CD4-positive, alpha-beta memory T cell (primary cell): ENCODE measurements at regions of chr19 and their contacts with region 1.

Region 1: DNA sequence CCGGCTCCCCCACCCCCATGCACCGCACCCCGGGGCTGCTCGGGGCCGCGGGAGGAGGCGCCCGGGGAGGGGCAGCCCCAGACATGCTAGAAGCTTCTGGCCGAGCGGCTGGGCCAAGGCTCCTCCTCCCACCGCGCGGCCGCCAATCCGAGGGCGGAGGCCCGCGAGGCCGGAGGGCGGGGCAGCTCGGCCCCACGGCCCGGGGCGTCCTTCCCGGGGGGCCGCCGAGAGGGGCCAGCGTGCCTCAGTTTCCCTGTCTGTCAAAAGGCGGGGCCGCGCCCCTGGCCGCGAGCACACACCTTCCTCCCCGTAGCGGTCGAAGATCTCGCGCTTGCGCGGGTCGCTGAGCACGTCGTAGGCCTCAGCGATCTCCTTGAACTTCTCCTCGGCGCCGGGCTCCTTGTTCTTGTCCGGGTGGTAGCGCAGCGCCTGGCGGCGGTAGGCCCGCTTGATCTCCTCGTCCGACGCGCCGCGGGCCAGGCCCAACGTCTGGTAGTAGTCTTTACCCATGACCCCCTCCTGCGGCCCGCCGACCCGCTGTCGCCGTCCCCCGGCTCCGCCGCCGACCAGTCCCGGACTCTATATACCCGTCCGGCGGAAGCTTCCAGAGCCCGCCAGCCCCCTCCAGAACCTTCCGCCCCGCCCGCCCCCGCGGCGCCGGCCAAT is at the start of gene DNAJB1:
- DNase-seq: peak in 3 of 5 donors; percentile 69 to 73 (median 73)
- H3K4me3 ChIP-seq: peak within 1 kb of the TSS; percentile 62 to 99
- H3K4me3 Mint-ChIP-seq: peak within 1 kb of the TSS; percentile 92 to 99 (median 96)
- H3K27ac ChIP-seq: peak within 1 kb of the TSS; percentile 94
- H3K27ac Mint-ChIP-seq: peak within 1 kb of the TSS; percentile 95 to 99 (median 99)
- H3K4me1 ChIP-seq: peaks cover 69% of the 10 kb centered on the region
- H3K4me1 Mint-ChIP-seq: peaks cover 46 to 81% (median 62%) of the 10 kb centered on the region in 4 donors
- H3K27me3 ChIP-seq: no peaks in the 10 kb centered on the region
- H3K27me3 Mint-ChIP-seq: no peaks in the 10 kb centered on the region
- total RNA-seq, gene DNAJB1: 122 to 138 TPM

Region 2: GRCh38 chr19:13938301-13939064 is 579.5 kb before region 1 on chr19 and contains the start of gene PODNL1:
- CTCF ChIA-PET with region 1: no interaction called
- POLR2A ChIA-PET with region 1: no interaction called
- intact Hi-C with region 1: no loop called
- DNase-seq: no peak
- H3K4me3 ChIP-seq: no peak within 1 kb of the TSS
- H3K4me3 Mint-ChIP-seq: no peak within 1 kb of the TSS
- H3K27ac ChIP-seq: no peak within 1 kb of the TSS
- H3K27ac Mint-ChIP-seq: no peak within 1 kb of the TSS
- H3K4me1 ChIP-seq: no peaks in the 10 kb centered on the region
- H3K4me1 Mint-ChIP-seq: peaks cover 0 to 8% (median 2%) of the 10 kb centered on the region in 4 donors
- H3K27me3 ChIP-seq: peaks cover 3% of the 10 kb centered on the region
- H3K27me3 Mint-ChIP-seq: peaks cover 0 to 5% of the 10 kb centered on the region in 2 donors
- total RNA-seq, gene PODNL1: not detected

Region 3: GRCh38 chr19:14383661-14384555 is 134.1 kb before region 1 on chr19:
- CTCF ChIA-PET with region 1: no interaction called
- POLR2A ChIA-PET with region 1: interaction called, 25 read pairs
- intact Hi-C with region 1: loop called (anchors 5 kb)
- DNase-seq: peak in 3 of 5 donors; percentile 40 to 91 (median 41)
- H3K4me3 ChIP-seq: peak overlapping the region; percentile 40 to 82
- H3K4me3 Mint-ChIP-seq: peak overlapping the region; percentile 91 to 99 (median 98)
- H3K27ac ChIP-seq: peak overlapping the region; percentile 99
- H3K27ac Mint-ChIP-seq: peak overlapping the region; percentile 96 to 100 (median 98)
- H3K4me1 ChIP-seq: peaks cover 41% of the 10 kb centered on the region
- H3K4me1 Mint-ChIP-seq: peaks cover 19 to 66% (median 37%) of the 10 kb centered on the region in 4 donors
- H3K27me3 ChIP-seq: no peaks in the 10 kb centered on the region
- H3K27me3 Mint-ChIP-seq: peaks cover 0 to 4% of the 10 kb centered on the region in 2 donors

Region 4: GRCh38 chr19:14505488-14506432 is 12.2 kb before region 1 on chr19:
- CTCF ChIA-PET with region 1: interaction called, 66 read pairs
- POLR2A ChIA-PET with region 1: interaction called, 1,220 read pairs
- intact Hi-C with region 1: loop called (anchors 1 kb)
- DNase-seq: peak; percentile 61 to 73 (median 69)
- H3K4me3 ChIP-seq: no peak overlapping the region
- H3K4me3 Mint-ChIP-seq: peak overlapping the region in 7 of 8 donors; percentile 33 to 76 (median 68)
- H3K27ac ChIP-seq: peak overlapping the region; percentile 49
- H3K27ac Mint-ChIP-seq: peak overlapping the region; percentile 90 to 99 (median 97)
- H3K4me1 ChIP-seq: peaks cover 46% of the 10 kb centered on the region
- H3K4me1 Mint-ChIP-seq: peaks cover 34 to 74% (median 47%) of the 10 kb centered on the region in 4 donors
- H3K27me3 ChIP-seq: no peaks in the 10 kb centered on the region
- H3K27me3 Mint-ChIP-seq: no peaks in the 10 kb centered on the region

Region 5: GRCh38 chr19:14536926-14537692 is 19.1 kb after region 1 on chr19:
- CTCF ChIA-PET with region 1: no interaction called
- POLR2A ChIA-PET with region 1: interaction called, 1,220 read pairs
- intact Hi-C with region 1: no loop called
- DNase-seq: peak in 4 of 5 donors; percentile 25 to 46 (median 30)
- H3K4me3 ChIP-seq: no peak overlapping the region
- H3K4me3 Mint-ChIP-seq: peak overlapping the region in 2 of 8 donors; percentile 10 to 17
- H3K27ac ChIP-seq: no peak overlapping the region
- H3K27ac Mint-ChIP-seq: peak overlapping the region in 5 of 7 donors; percentile 6 to 76 (median 62)
- H3K4me1 ChIP-seq: peaks cover 26% of the 10 kb centered on the region
- H3K4me1 Mint-ChIP-seq: peaks cover 18 to 55% (median 31%) of the 10 kb centered on the region in 4 donors
- H3K27me3 ChIP-seq: no peaks in the 10 kb centered on the region
- H3K27me3 Mint-ChIP-seq: no peaks in the 10 kb centered on the region

Region 6: DNA sequence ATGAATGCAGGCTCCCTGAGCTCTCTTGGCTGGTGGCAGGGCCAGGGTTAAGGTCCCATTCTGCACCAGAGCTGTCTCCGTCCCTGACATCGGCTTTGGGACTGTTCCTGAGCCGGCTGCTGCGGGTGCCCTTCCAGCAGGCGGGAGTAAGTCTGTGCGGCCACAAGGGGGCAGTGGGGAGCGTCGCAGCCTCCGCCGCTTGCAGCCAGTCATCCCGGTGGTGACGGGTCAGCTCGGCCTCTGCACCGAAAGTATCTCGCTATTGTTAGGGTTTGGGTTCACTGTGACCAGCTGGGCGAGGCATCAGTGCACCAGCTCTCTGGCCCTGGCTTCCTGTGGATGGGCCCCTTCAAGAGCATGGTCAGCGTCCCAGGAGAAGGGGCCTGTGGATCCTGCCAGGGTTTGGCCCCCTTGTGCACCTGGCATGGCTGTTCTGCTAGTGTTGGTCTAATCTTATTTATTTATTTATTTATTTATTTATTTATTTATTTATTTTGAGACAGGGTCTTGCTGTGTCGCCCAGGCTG is 38.8 kb after region 1 on chr19:
- CTCF ChIA-PET with region 1: interaction called, 8 read pairs
- POLR2A ChIA-PET with region 1: interaction called, 35 read pairs
- intact Hi-C with region 1: loop called (anchors 1 kb)
- DNase-seq: peak; percentile 58 to 65 (median 62)
- H3K4me3 ChIP-seq: peak overlapping the region in 1 of 2 donors; percentile 18
- H3K4me3 Mint-ChIP-seq: peak overlapping the region; percentile 36 to 79 (median 60)
- H3K27ac ChIP-seq: no peak overlapping the region
- H3K27ac Mint-ChIP-seq: peak overlapping the region in 6 of 7 donors; percentile 52 to 95 (median 74)
- H3K4me1 ChIP-seq: peaks cover 45% of the 10 kb centered on the region
- H3K4me1 Mint-ChIP-seq: peaks cover 24 to 65% (median 30%) of the 10 kb centered on the region in 4 donors
- H3K27me3 ChIP-seq: no peaks in the 10 kb centered on the region
- H3K27me3 Mint-ChIP-seq: no peaks in the 10 kb centered on the region

Region 7: GRCh38 chr19:14614099-14614412 is 96.1 kb after region 1 on chr19:
- CTCF ChIA-PET with region 1: no interaction called
- POLR2A ChIA-PET with region 1: no interaction called
- intact Hi-C with region 1: no loop called
- DNase-seq: no peak
- H3K4me3 ChIP-seq: no peak overlapping the region
- H3K4me3 Mint-ChIP-seq: no peak overlapping the region
- H3K27ac ChIP-seq: no peak overlapping the region
- H3K27ac Mint-ChIP-seq: peak overlapping the region in 1 of 7 donors; percentile 43
- H3K4me1 ChIP-seq: no peaks in the 10 kb centered on the region
- H3K4me1 Mint-ChIP-seq: no peaks in the 10 kb centered on the region
- H3K27me3 ChIP-seq: no peaks in the 10 kb centered on the region
- H3K27me3 Mint-ChIP-seq: peaks cover 2 to 6% of the 10 kb centered on the region in 2 donors

Region 8: DNA sequence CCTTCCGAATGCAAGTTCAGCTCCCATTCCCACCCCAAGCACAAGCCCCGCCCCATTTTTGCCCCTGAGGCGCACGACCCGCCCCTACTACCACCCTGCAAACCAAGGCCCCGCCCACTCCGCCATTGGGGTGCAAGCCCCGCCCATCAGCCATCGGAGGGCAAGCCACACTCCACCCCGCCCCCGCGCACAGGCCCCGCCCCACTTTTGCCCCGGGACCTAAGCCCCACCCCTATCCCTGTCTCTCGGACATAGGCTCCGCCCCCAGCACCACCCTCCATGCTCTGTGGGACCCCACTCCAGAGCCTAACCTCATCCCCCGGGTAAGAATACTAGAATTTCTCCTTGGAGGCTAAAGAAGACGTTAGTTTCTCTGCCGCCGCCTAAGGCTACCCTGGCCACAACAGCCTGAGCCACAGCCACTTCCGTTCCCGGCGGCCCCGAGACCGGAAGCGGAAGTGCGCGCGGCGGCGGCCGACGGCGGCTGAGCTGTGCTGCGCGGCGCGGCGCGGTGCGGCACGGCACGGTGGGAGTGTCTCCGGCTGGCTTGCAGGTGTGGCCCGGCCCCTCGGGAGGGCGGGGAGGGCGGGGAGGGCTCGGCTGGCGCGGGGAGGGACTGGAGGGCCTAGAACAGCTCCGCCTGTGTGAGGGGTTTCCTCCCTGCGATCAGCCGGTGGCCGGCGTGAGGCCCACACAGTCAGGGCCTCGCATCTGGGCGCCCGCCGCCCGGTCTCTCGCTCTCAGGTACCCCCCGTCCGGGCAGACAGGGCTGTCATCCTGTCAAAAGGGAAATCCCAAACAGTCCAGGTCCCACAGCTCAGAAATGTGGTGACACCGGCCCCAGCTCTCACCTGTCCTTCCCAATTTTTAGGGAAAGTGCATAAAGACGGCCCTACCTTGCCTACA is 171.9 kb after region 1 on chr19 and contains the start of gene ZNF333:
- CTCF ChIA-PET with region 1: no interaction called
- POLR2A ChIA-PET with region 1: interaction called, 3 read pairs
- intact Hi-C with region 1: loop called (anchors 5 kb)
- DNase-seq: peak; percentile 95 to 97 (median 95)
- H3K4me3 ChIP-seq: peak within 1 kb of the TSS; percentile 20 to 84
- H3K4me3 Mint-ChIP-seq: peak within 1 kb of the TSS; percentile 93 to 98 (median 96)
- H3K27ac ChIP-seq: peak within 1 kb of the TSS; percentile 79
- H3K27ac Mint-ChIP-seq: peak within 1 kb of the TSS; percentile 96 to 100 (median 99)
- H3K4me1 ChIP-seq: peaks cover 13% of the 10 kb centered on the region
- H3K4me1 Mint-ChIP-seq: peaks cover 11 to 29% (median 16%) of the 10 kb centered on the region in 4 donors
- H3K27me3 ChIP-seq: no peaks in the 10 kb centered on the region
- H3K27me3 Mint-ChIP-seq: no peaks in the 10 kb centered on the region
- total RNA-seq, gene ZNF333: 45.9 to 48.3 TPM